Mammary epithelial cell (primary cell): ENCODE measurements at regions of chr10 and their contacts with region 1.

Region 1: DNA sequence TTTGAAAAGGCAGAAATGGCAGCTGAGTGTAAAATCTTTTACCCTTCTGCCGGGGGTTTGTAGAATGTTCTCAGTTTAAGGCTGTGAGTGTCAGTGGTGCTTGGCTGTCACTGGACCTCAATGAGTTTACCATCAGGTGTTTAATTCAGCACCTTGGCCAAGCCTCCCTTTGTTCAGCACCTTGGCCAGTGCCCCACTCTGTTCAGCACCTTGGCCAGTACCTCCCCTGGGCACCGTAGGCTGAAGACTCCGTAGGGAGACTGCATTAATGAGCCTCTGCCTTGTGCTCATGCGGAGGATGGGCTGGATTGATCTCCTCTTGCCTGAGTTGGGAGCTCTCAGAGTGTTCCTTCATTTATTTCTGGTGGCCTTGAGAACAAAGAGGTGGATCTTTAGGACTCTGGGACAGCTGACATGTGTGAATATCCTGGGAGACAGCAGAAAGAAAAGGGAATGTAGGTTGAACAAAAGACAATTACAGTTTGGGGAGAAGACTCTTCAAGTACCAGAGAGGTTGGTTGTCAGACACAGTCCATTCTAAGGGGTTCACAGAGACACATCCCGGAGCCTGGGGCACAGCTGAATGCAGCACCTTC is 1.6 kb downstream of the FAM24A start:
- DNase-seq: peak; percentile 53
- H3K4me3 ChIP-seq: no peak overlapping the region
- H3K27ac ChIP-seq: no peak overlapping the region
- H3K4me1 ChIP-seq: no peaks in the 10 kb centered on the region
- H3K27me3 ChIP-seq: peaks cover under 1% of the 10 kb centered on the region
- CTCF ChIP-seq: no peak

Region 2: DNA sequence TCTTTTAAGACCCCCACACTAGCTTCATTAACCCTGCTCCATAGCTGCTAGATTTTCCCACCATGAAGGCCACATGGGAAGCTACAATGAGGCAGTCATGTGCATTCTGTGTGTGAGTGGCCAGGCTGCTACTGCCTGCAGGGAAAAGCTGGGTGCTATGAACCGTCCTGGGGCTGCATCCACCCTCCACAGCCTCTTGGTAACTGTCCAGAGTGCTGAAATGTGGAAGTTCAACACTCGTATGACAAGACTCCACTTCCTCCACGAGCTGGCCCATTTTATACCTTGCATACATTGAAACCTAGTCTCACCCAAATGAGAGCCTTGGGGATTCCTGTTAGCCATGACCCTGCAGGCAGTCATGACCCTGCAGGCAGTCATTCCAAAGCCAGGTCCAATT is 125.7 kb before region 1 on chr10:
- CTCF ChIA-PET with region 1: no interaction called
- dilution Hi-C with region 1: no loop called
- in situ Hi-C with region 1: no loop called
- intact Hi-C with region 1: loop called (anchors 5 kb)
- DNase-seq: peak; percentile 30
- H3K4me3 ChIP-seq: no peak overlapping the region
- H3K27ac ChIP-seq: no peak overlapping the region
- H3K4me1 ChIP-seq: no peaks in the 10 kb centered on the region
- H3K27me3 ChIP-seq: no peaks in the 10 kb centered on the region
- CTCF ChIP-seq: no peak